CD8-positive, alpha-beta memory T cell (primary cell): ENCODE measurements at regions of chr9 and their contacts with region 1.

Region 1: GRCh38 chr9:97696803-97697601 is at the start of gene XPA:
- DNase-seq: peak; percentile 97 to 98 (median 97)
- H3K4me3 ChIP-seq: peak within 1 kb of the TSS; percentile 78
- H3K4me3 Mint-ChIP-seq: peak within 1 kb of the TSS; percentile 87 to 96 (median 92)
- H3K27ac ChIP-seq: peak within 1 kb of the TSS; percentile 69
- H3K27ac Mint-ChIP-seq: peak within 1 kb of the TSS; percentile 93 to 99 (median 97)
- H3K4me1 ChIP-seq: peaks cover 38% of the 10 kb centered on the region
- H3K4me1 Mint-ChIP-seq: peaks cover 53 to 58% (median 53%) of the 10 kb centered on the region in 3 donors
- H3K27me3 ChIP-seq: no peaks in the 10 kb centered on the region
- H3K27me3 Mint-ChIP-seq: peaks cover 0 to 10% of the 10 kb centered on the region in 2 donors
- total RNA-seq, gene XPA: 11.2 to 13.0 TPM

Region 2: GRCh38 chr9:97632985-97633858 is 63.8 kb before region 1 on chr9 and contains the starts of genes NCBP1 and TSTD2:
- CTCF ChIA-PET with region 1: interaction called, 9 read pairs
- POLR2A ChIA-PET with region 1: interaction called, 22 read pairs
- DNase-seq: peak; percentile 90 to 98 (median 98)
- H3K4me3 ChIP-seq: peak within 1 kb of the TSS; percentile 75
- H3K4me3 Mint-ChIP-seq: peak within 1 kb of the TSS; percentile 95 to 99 (median 98)
- H3K27ac ChIP-seq: peak within 1 kb of the TSS; percentile 89
- H3K27ac Mint-ChIP-seq: peak within 1 kb of the TSS; percentile 99 to 100 (median 100)
- H3K4me1 ChIP-seq: peaks cover 46% of the 10 kb centered on the region
- H3K4me1 Mint-ChIP-seq: peaks cover 49 to 76% (median 69%) of the 10 kb centered on the region in 3 donors
- H3K27me3 ChIP-seq: no peaks in the 10 kb centered on the region
- H3K27me3 Mint-ChIP-seq: no peaks in the 10 kb centered on the region
- total RNA-seq, gene NCBP1: 47.7 to 49.6 TPM
- total RNA-seq, gene TSTD2: 13.8 to 14.7 TPM